Activated T-helper 2 cell treated with anti-CD3 and anti-CD28 coated beads, Interferon-gamma antibody, Interleukin-2, Interleukin-4, amounts not matched to agents 10 μg/mL and 5 μg/mL and 100 μg/mL, durations not matched to agents 14 hours and 24 hours and 36 hours (primary cell): ENCODE measurements at regions of chr6 and their contacts with region 1.

Region 1: DNA sequence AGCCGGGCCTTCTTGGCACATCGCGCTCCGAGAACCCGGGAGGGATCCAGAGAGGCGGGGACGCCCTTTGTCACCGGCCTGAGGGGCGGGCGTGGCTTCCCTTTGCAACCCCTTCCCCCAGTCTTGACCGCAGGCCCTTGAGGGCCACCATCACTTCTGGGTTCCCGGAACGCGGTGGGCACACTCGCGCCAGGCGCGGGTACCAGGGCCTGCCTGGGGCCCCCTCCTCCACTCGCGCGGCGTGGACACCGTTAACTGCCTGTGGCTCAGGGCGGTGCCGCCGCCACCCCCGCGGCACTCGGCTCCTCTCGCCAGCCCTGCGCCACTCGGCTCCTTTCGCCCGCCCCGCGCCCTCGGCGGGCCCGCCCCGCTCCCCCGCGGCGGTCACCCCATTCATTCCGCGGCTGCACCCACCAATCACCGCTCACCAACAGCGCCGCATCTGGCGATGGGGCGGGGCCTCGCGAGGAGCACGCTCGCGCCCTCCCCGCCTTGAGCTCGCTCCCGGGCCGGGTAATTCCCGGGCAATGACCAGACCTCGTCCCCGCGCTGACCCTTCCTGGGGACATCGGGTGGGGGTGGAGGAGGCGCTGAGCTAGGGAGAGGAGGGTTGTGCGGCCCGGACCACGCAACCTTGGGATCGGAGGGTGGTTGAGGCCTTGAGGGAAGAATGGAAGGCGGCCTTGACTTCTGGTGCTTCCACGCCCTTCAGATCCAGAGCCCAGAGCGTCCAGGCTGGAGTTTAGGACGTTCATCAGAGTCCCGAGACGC is 10.5 kb upstream of the ELOVL5 start:
- DNase-seq: peak; percentile 92
- H3K4me3 Mint-ChIP-seq: peak overlapping the region; percentile 92
- H3K27ac Mint-ChIP-seq: peak overlapping the region; percentile 99
- H3K4me1 Mint-ChIP-seq: peaks cover 36% of the 10 kb centered on the region
- H3K27me3 Mint-ChIP-seq: peaks cover 5% of the 10 kb centered on the region

Region 2: DNA sequence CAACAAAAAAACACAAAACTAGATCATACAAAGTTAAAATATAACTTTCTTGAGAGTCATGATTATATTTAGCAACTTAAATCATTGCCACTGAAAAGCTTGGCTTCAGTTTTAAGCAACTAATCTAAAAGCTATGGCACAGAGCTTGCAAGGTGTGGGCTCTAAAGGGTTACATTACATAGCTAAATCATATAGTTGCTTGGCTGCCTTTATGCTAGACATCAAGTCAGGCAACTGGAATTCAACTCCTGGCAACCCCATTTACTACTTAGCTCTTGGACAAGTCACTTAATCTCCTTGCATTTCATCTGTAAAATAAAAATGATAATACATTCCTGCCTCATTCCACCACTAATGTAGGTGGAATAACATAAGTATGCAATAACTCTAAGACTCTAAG is 169.7 kb before region 1 on chr6:
- intact Hi-C with region 1: loop called (anchors 5 kb)
- DNase-seq: no peak
- H3K4me3 Mint-ChIP-seq: no peak overlapping the region
- H3K27ac Mint-ChIP-seq: no peak overlapping the region
- H3K4me1 Mint-ChIP-seq: peaks cover 7% of the 10 kb centered on the region
- H3K27me3 Mint-ChIP-seq: peaks cover 5% of the 10 kb centered on the region

Region 3: DNA sequence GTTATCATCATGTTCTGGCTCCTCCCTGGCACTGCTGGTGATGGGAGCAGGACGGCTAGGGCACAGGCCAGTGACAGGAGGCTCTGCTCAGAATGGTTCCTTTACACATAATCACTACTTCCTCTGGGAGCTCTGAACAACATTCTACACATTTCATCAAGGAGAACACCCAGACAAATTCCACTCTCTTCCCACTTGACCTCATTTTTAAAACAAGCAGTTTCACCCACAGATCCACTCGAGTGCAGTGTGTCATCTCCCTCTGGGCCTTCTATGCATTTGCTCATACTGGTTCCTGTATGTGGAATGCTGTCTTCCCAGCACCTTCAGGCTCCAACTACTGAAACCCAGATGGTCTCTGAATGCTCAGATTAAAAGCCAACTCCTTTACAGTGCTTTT is 95.3 kb before region 1 on chr6:
- intact Hi-C with region 1: no loop called
- DNase-seq: no peak
- H3K4me3 Mint-ChIP-seq: no peak overlapping the region
- H3K27ac Mint-ChIP-seq: peak overlapping the region; percentile 0
- H3K4me1 Mint-ChIP-seq: peaks cover 3% of the 10 kb centered on the region
- H3K27me3 Mint-ChIP-seq: no peaks in the 10 kb centered on the region

Region 4: DNA sequence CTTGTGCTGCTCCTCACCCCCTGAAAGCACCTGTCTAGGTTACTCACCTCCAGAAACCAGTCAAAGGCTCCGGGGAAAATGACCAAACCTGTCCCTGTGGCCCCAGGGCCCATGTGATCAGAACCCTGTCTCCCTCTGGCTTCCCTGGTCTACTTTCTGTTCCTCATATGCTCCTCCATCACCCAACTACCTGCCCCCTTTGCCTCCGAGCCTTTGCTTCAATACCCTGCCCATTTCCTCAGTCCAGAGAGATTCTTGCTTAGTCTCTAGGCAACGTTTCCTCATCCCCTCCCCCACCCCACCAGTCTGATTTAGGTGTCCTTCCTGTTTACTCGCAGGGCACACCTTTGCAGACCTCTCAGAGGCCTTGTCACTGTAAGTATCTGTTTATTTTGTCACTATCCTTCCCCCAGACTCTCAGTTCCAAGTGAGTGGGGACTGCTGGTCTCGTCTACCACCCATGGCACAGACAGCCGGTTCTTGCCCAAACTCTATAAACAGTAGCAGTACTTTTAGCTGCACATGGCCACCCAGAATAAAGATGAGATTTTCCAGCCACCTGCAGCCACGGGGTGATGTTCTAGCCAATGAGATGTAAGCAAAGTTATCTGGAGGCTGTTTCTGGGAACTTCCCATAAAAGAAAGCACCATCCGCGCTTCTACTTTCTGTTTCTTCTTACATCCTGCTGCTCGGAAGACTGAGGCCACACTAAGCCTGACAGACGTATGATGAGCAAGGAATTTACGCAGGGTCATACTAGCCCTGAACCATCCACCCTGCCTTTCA is 23.9 kb before region 1 on chr6:
- intact Hi-C with region 1: loop called (anchors 1 kb)
- DNase-seq: peak; percentile 61
- H3K4me3 Mint-ChIP-seq: peak overlapping the region; percentile 76
- H3K27ac Mint-ChIP-seq: peak overlapping the region; percentile 96
- H3K4me1 Mint-ChIP-seq: peaks cover 67% of the 10 kb centered on the region
- H3K27me3 Mint-ChIP-seq: no peaks in the 10 kb centered on the region